ENCODE measurements at regions of chr14 and their contacts with region 1.

Region 1: DNA sequence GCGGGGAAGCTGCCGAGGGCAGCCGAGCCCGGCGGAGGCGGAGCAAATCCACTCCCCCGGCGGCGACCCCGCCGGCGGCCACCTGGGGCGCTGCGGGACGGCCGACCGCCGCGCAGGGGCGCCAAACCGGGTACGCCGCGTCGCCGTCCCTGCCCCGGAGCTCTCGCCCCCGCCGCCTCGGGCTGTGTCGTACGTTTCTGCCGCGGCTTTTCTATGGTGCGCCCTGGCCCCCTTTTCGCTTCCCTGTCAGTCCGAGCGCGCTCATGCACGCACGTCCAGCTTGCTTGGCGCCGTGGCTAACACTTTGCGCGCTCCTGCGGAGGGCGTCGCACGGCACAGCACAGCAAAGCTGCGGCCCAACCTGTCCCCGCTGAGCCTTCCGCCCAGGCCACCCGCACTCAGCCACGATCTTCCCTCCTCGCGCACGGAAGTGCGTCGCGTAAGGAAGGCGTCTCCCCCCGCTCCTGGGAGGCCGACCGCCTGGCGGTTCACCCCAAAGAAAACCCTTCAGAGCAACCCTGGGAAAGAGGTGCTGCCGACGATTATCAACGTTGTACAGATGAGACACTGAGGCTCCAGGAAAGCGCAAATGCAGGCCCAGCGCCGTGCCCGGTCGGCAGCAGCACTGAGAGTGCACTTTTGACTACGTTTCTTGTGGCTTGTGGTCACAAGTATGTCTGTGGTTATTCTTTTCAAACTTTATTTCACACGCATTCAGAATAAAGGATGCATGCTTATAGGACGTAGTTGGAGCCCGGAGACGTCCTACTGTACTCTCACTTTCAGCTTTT is at the start of gene HECTD1:
- DNase-seq: peak; percentile 84 to 94 (median 92)
- ATAC-seq: peak; percentile 81 to 96 (median 94)
- H3K4me3 ChIP-seq: peak within 1 kb of the TSS; percentile 74 to 97 (median 84)
- H3K27ac ChIP-seq: peak within 1 kb of the TSS; percentile 92 to 100 (median 98)
- H3K4me1 ChIP-seq: peaks cover 6 to 35% (median 22%) of the 10 kb centered on the region in 12 donors
- H3K27me3 ChIP-seq: no peaks in the 10 kb centered on the region
- CTCF ChIP-seq: peak; percentile 42 to 97 (median 93)
- POLR2A ChIP-seq: peak in 1 of 2 donors; percentile 40
- total RNA-seq, gene HECTD1: 122 to 185 (median 158) TPM

Region 2: GRCh38 chr14:31127690-31128089 is 80.3 kb before region 1 on chr14:
- intact Hi-C with region 1: no loop called
- DNase-seq: no peak
- ATAC-seq: no peak
- H3K4me3 ChIP-seq: no peak overlapping the region
- H3K27ac ChIP-seq: no peak overlapping the region
- H3K4me1 ChIP-seq: peaks cover 0 to 13% (median 0%) of the 10 kb centered on the region in 12 donors
- H3K27me3 ChIP-seq: no peaks in the 10 kb centered on the region
- CTCF ChIP-seq: no peak
- POLR2A ChIP-seq: no peak

Region 3: DNA sequence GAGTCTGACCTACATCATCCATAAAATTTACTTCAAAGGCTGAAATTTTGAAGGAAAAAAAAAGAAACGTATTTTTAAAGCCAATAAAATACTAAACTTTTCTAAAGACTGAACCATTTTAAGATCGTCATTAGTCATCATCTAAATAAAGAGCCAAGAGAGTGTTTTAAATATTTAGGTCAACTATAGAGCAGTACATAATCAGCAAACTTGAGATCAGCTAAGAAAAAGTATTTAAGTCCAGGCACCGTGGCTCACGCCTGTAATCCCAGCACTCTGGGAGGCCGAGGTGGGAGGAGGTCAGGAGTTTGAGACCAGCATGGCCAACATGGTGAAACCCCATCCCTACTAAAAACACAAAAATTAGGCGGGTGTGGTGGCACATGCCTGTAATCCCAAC is 35.9 kb before region 1 on chr14:
- intact Hi-C with region 1: loop called in 1 of 10 experiments (anchors 5 kb)
- DNase-seq: no peak
- ATAC-seq: peak in 1 of 4 donors; percentile 28
- H3K4me3 ChIP-seq: no peak overlapping the region
- H3K27ac ChIP-seq: no peak overlapping the region
- H3K4me1 ChIP-seq: peaks cover 0 to 18% (median 2%) of the 10 kb centered on the region in 12 donors
- H3K27me3 ChIP-seq: no peaks in the 10 kb centered on the region
- CTCF ChIP-seq: no peak
- POLR2A ChIP-seq: no peak

Region 4: DNA sequence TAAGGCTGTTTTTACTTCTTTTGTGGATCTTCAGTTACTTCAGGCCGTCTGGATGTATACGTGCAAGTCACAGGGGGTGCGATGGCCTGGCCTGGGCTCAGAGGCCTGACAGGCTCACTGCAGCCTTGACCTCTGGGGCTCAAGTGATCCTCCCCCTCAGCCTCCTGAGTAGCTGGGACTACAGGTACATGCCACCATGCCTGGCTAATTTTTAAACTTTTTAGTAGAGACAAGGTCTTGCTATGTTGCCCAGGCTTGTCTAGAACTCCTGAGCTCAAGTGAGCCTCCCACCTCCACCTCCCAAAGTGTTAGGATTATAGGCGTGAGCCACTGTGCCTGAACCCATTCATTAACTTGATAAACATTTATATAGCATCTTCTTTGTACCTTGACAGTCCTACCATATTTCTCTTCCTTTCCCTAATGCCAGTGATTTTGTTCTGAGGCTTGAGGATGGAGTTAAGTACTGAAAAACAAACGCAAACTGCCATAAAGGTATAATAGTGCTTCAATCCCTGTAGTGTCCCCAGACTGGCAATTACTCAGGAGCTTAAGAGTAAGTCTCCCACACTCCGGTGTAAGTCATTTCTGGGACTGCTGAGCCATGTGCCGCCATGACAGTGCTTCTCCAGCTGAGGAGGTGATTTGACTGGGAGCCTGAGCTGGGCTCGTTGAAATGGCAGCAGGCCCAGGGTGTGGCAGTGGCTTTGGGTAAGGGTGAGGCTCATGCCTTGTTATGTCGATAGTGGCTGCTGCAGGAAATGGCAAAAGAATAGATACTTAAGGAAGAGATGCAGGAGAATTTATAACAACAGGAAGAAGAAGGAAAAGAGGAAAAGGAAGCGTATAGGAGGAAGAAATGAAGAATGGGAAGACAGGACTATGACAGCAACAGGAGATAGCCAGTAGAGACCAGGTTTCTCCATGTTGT is 43.3 kb after region 1 on chr14:
- intact Hi-C with region 1: no loop called
- DNase-seq: no peak
- ATAC-seq: no peak
- H3K4me3 ChIP-seq: no peak overlapping the region
- H3K27ac ChIP-seq: no peak overlapping the region
- H3K4me1 ChIP-seq: no peaks in the 10 kb centered on the region
- H3K27me3 ChIP-seq: no peaks in the 10 kb centered on the region
- CTCF ChIP-seq: no peak
- POLR2A ChIP-seq: no peak

Region 5: GRCh38 chr14:31286456-31287293 is 78.7 kb after region 1 on chr14:
- intact Hi-C with region 1: loop called in 2 of 10 experiments (anchors 5 to 10 kb)
- DNase-seq: no peak
- ATAC-seq: peak in 2 of 4 donors; percentile 34 to 41
- H3K4me3 ChIP-seq: no peak overlapping the region
- H3K27ac ChIP-seq: no peak overlapping the region
- H3K4me1 ChIP-seq: peaks cover 0 to 20% (median 0%) of the 10 kb centered on the region in 12 donors
- H3K27me3 ChIP-seq: no peaks in the 10 kb centered on the region
- CTCF ChIP-seq: peak in 4 of 12 donors; percentile 12 to 39 (median 20)
- POLR2A ChIP-seq: no peak

Region 6: GRCh38 chr14:31320216-31320615 is 112.3 kb after region 1 on chr14:
- intact Hi-C with region 1: loop called in 4 of 10 experiments (anchors 5 to 10 kb)
- DNase-seq: peak; percentile 58 to 81 (median 69)
- ATAC-seq: peak; percentile 91 to 98 (median 98)
- H3K4me3 ChIP-seq: no peak overlapping the region
- H3K27ac ChIP-seq: peak overlapping the region in 3 of 12 donors; percentile 2 to 30 (median 18)
- H3K4me1 ChIP-seq: peaks cover 0 to 11% (median 2%) of the 10 kb centered on the region in 12 donors
- H3K27me3 ChIP-seq: no peaks in the 10 kb centered on the region
- CTCF ChIP-seq: no peak
- POLR2A ChIP-seq: no peak

Region 7: DNA sequence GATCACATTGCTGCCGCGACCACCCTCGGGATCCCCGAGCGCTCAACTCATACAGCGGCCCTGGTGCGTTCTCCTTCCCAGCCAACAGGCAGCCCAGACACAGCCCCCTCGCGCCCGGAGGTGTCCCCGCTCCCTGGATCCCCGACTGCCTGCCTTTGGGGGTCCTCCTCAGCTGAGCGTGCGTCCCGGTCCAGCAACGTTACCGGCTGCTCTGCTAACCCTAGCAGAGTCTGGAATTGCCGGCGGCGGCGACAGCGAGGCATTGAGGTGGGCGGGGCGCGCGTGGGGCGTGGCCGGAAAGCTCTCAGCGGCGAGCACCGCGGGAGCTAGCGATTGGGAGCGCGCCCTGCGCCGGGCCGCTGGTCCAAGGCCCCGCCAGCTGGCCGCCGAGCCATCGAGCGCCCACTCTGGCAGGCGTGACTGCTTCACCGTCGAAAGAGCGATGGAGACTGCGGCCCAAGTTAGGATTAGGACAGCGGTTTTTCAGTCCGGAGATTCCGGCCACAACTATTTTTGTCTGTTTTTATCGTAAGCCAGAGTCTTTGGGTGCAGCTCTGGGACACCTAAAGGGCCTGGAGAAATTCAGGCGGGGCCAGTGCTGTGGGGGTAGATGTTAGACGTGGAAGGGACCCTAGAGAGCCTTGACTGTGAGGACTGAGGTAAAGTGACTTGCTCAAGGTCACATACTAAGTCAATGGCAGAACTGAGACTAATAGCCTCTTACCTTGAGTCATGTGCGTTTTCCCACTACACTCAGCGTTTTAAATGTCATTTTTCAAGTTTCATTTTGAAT is 212.6 kb after region 1 on chr14 and contains the start of gene HEATR5A:
- intact Hi-C with region 1: loop called in 2 of 10 experiments (anchors 2 to 5 kb)
- DNase-seq: peak; percentile 96 to 98 (median 97)
- ATAC-seq: peak; percentile 95 to 99 (median 98)
- H3K4me3 ChIP-seq: peak within 1 kb of the TSS; percentile 73 to 98 (median 94)
- H3K27ac ChIP-seq: peak within 1 kb of the TSS; percentile 70 to 96 (median 90)
- H3K4me1 ChIP-seq: peaks cover 0 to 28% (median 19%) of the 10 kb centered on the region in 12 donors
- H3K27me3 ChIP-seq: no peaks in the 10 kb centered on the region
- CTCF ChIP-seq: peak in 7 of 12 donors; percentile 24 to 55 (median 36)
- POLR2A ChIP-seq: peak; percentile 96 to 100
- total RNA-seq, gene HEATR5A: 24.9 to 57.6 (median 45.5) TPM